CD8-positive, alpha-beta T cell (primary cell): ENCODE measurements at regions of chr17 and their contacts with region 1.

Region 1: GRCh38 chr17:71482625-71483024 is 638.2 kb upstream of the SOX9 start:
- DNase-seq: no peak
- ATAC-seq: no peak
- H3K4me3 ChIP-seq: no peak overlapping the region
- H3K4me3 Mint-ChIP-seq: no peak overlapping the region
- H3K27ac ChIP-seq: no peak overlapping the region
- H3K27ac Mint-ChIP-seq: no peak overlapping the region
- H3K4me1 ChIP-seq: no peaks in the 10 kb centered on the region
- H3K4me1 Mint-ChIP-seq: no peaks in the 10 kb centered on the region
- H3K27me3 ChIP-seq: no peaks in the 10 kb centered on the region
- H3K27me3 Mint-ChIP-seq: peaks cover 2% of the 10 kb centered on the region
- CTCF ChIP-seq: no peak

Region 2: DNA sequence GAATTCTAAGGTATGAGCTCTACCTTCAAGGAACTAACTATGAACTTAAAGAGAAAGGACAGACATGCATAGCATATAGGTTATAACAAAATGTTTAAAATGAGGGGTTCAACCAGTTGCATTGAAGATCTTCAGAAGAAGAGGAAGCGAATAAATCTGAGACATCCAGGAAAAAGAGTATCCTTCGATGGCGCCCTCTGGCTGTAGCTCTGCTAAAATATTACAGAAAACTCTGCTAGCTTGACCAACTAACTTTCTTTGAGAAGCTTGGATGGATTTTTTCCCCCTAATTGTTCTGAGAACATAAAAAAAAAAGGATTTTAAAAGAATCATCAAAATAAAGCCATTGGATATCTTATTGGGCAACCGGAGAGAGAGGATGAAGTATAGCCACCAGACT is 21.7 kb before region 1 on chr17:
- CTCF ChIA-PET with region 1: no interaction called
- POLR2A ChIA-PET with region 1: no interaction called
- intact Hi-C with region 1: loop called in 1 of 2 experiments (anchors 2 kb)
- DNase-seq: no peak
- ATAC-seq: no peak
- H3K4me3 ChIP-seq: no peak overlapping the region
- H3K4me3 Mint-ChIP-seq: no peak overlapping the region
- H3K27ac ChIP-seq: no peak overlapping the region
- H3K27ac Mint-ChIP-seq: no peak overlapping the region
- H3K4me1 ChIP-seq: no peaks in the 10 kb centered on the region
- H3K4me1 Mint-ChIP-seq: no peaks in the 10 kb centered on the region
- H3K27me3 ChIP-seq: no peaks in the 10 kb centered on the region
- H3K27me3 Mint-ChIP-seq: no peaks in the 10 kb centered on the region
- CTCF ChIP-seq: no peak

Region 3: GRCh38 chr17:71572343-71572742 is 89.7 kb after region 1 on chr17:
- CTCF ChIA-PET with region 1: no interaction called
- POLR2A ChIA-PET with region 1: no interaction called
- intact Hi-C with region 1: loop called in 1 of 2 experiments (anchors 10 kb)
- DNase-seq: no peak
- ATAC-seq: no peak
- H3K4me3 ChIP-seq: no peak overlapping the region
- H3K4me3 Mint-ChIP-seq: no peak overlapping the region
- H3K27ac ChIP-seq: no peak overlapping the region
- H3K27ac Mint-ChIP-seq: no peak overlapping the region
- H3K4me1 ChIP-seq: no peaks in the 10 kb centered on the region
- H3K4me1 Mint-ChIP-seq: no peaks in the 10 kb centered on the region
- H3K27me3 ChIP-seq: no peaks in the 10 kb centered on the region
- H3K27me3 Mint-ChIP-seq: no peaks in the 10 kb centered on the region
- CTCF ChIP-seq: no peak

Region 4: GRCh38 chr17:71709946-71710345 is 227.3 kb after region 1 on chr17:
- CTCF ChIA-PET with region 1: no interaction called
- POLR2A ChIA-PET with region 1: no interaction called
- intact Hi-C with region 1: no loop called
- DNase-seq: no peak
- ATAC-seq: no peak
- H3K4me3 ChIP-seq: no peak overlapping the region
- H3K4me3 Mint-ChIP-seq: no peak overlapping the region
- H3K27ac ChIP-seq: no peak overlapping the region
- H3K27ac Mint-ChIP-seq: no peak overlapping the region
- H3K4me1 ChIP-seq: no peaks in the 10 kb centered on the region
- H3K4me1 Mint-ChIP-seq: no peaks in the 10 kb centered on the region
- H3K27me3 ChIP-seq: no peaks in the 10 kb centered on the region
- H3K27me3 Mint-ChIP-seq: no peaks in the 10 kb centered on the region
- CTCF ChIP-seq: no peak